ENCODE measurements at regions of chrX and their contacts with region 1.

Region 1: DNA sequence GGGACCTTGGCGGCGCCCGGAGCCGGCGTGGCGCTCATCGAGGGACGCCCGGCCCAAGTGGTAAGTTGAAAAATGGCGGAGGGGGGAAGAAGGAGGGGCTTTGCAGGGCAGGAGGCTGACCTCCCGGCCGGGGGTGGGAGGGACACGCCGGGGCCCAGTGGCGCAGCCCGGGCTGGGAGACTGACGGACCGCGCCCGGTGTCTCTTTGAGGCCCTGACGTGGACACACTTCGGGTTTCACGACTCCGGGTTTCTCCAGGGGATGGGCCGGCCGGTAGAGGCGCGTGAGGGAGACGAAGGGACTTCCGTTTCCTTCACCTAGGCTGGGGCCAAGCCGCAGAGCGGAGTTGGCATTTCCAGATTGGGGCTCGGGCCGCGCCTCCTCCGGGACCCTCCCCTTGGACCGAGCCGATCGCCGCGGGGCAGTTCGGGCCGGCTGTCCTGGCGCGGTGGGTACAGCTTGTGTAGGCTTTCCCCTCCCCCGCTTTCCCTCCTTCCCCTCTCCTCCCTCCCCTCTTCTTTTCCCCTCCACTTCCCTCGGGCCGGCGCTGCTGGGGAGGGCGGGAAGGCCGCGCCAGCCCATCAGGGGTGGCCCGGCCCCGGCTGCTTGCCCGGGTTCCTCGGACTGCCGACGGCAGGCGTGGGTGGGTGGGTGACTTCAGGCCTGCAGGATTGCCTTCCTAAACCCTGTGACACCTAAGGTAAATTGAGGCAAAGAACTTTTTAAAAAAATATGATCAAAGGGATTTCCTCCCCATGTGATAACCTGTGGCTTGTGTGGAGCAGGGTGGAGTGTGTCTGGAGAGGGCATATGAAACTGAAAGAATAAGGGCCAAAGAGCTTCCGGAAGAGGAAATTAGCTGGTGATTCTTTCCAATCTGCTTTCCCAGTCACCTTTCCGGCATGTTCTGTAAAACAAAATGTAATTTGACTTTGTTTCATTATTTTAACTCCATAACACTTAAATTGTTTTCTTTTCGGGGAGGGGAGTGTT is at the start of gene XIAP:
- DNase-seq: peak; percentile 89
- H3K4me3 Mint-ChIP-seq: peak within 1 kb of the TSS; percentile 73
- H3K27ac Mint-ChIP-seq: peak within 1 kb of the TSS; percentile 73
- H3K4me1 Mint-ChIP-seq: no peaks in the 10 kb centered on the region
- H3K27me3 Mint-ChIP-seq: no peaks in the 10 kb centered on the region
- CTCF ChIP-seq: no peak
- total RNA-seq, gene XIAP: 62.1 and 62.9 TPM in 2 replicates

Region 2: GRCh38 chrX:123960042-123960611 is 100.0 kb after region 1 on chrX:
- CTCF ChIA-PET with region 1: interaction called, 4 read pairs
- POLR2A ChIA-PET with region 1: interaction called, 22 read pairs
- intact Hi-C with region 1: loop called (anchors 1 kb)
- DNase-seq: peak; percentile 88
- H3K4me3 Mint-ChIP-seq: peak overlapping the region; percentile 92
- H3K27ac Mint-ChIP-seq: peak overlapping the region; percentile 99
- H3K4me1 Mint-ChIP-seq: no peaks in the 10 kb centered on the region
- H3K27me3 Mint-ChIP-seq: no peaks in the 10 kb centered on the region
- CTCF ChIP-seq: peak; percentile 87

Region 3: GRCh38 chrX:124127496-124127895 is 267.4 kb after region 1 on chrX:
- CTCF ChIA-PET with region 1: no interaction called
- POLR2A ChIA-PET with region 1: no interaction called
- intact Hi-C with region 1: no loop called
- DNase-seq: no peak
- H3K4me3 Mint-ChIP-seq: no peak overlapping the region
- H3K27ac Mint-ChIP-seq: no peak overlapping the region
- H3K4me1 Mint-ChIP-seq: no peaks in the 10 kb centered on the region
- H3K27me3 Mint-ChIP-seq: no peaks in the 10 kb centered on the region
- CTCF ChIP-seq: no peak

Measured in MCF 10A (cell line).